ENCODE measurements at regions of chr1 and their contacts with region 1.

Region 1: GRCh38 chr1:160618763-160619274 is 28.0 kb downstream of the SLAMF1 start:
- DNase-seq: no peak
- ATAC-seq: peak; percentile 54
- H3K4me3 ChIP-seq: no peak overlapping the region
- H3K27ac ChIP-seq: no peak overlapping the region; the same call in 1 of the 2 replicates
- H3K4me1 ChIP-seq: peaks cover 28% of the 10 kb centered on the region
- H3K27me3 ChIP-seq: no peaks in the 10 kb centered on the region
- CTCF ChIP-seq: peak; percentile 72 to 88 (median 82)
- EP300 ChIP-seq: no peak
- POLR2A ChIP-seq: no peak
- RAD21 ChIP-seq: peak; percentile 75

Region 2: DNA sequence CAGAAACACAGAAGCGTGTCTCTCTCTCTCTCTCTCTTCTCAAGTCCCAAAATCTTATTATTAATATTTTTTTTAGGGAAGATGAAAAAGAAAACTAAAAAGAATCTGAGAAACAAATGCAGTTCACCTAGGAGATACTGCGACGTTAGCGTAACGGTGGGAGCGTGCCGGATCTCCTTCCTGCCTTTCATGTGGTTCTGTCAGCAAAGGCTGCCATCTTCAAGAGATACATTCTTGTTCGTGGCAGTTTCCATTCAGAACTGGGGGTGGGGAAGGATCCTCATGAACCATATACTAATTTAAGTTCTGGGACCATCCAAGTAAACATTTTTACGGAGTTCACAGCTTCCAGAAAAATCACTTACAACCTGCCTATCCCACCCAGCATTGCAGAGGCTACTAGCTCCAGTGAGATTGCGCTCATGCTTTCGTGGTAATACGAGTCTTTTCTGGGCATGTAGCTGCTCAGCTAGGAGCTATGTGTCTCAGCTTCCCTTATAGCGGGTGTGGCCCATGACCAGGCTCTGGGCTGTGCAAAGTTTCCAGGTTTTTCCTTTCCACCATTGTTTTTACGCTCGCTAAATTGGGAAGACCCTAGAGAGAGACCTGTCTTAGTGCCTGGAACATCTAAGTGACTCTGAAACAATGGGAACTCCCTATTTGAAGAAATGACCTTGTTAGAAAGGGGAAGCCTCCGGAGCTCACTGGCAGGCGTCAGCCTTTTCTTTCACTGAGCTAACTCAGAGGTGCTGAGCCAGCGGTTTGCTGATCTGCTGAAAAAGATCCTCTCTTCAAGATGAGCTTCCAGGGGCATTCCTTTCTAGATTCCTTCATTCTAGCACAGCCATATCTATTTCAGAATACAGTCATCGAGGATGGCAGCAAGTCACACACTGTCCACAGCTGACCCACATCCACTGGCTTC is 10.7 kb after region 1 on chr1:
- CTCF ChIA-PET with region 1: interaction called, 9 read pairs
- POLR2A ChIA-PET with region 1: interaction called, 5 read pairs
- RAD21 ChIA-PET with region 1: interaction called, 12 read pairs
- SMC1A ChIA-PET with region 1: interaction called, 9 read pairs
- in situ Hi-C with region 1: no loop called
- intact Hi-C with region 1: no loop called
- DNase-seq: no peak
- ATAC-seq: no peak
- H3K4me3 ChIP-seq: peak overlapping the region; percentile 3; the same call in 1 of the 2 replicates
- H3K27ac ChIP-seq: peak overlapping the region; percentile 30
- H3K4me1 ChIP-seq: peaks cover 69% of the 10 kb centered on the region
- H3K27me3 ChIP-seq: no peaks in the 10 kb centered on the region
- CTCF ChIP-seq: no peak
- EP300 ChIP-seq: no peak
- POLR2A ChIP-seq: peak; percentile 46
- RAD21 ChIP-seq: no peak

Region 3: DNA sequence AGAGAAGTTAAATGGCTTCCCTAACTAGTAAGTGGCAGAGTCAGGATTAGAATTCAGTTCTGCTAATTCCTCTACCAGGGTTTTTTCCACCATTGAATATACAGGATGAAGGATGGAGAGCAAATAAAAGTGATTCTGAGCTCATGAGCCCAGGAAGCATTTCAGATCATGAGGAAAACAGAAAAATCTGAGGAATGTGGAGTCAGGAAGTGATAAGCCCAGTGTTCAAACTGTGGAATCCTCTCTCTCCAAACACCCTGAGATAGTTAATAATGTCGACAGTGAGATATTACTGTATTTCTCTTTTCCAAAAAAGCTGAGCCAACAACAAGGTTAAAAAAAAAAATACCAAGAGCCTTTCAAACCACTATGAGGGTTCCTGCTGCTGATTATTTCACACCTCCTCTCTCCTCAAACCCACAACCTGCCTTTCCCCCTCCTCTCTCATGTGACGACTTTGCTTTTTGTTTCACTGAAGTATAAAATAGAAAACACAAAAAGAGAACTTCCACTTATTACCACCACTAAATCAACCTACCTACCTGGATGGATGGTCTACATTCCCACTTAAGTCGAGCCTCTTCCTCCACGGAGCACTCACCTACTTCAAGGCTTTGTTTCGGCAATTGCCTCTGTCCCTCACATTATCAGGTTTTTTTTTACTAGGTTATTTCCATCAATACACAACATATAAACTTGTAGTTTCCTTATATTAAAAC is 19.2 kb after region 1 on chr1:
- CTCF ChIA-PET with region 1: interaction called, 9 read pairs
- POLR2A ChIA-PET with region 1: interaction called, 68 read pairs
- RAD21 ChIA-PET with region 1: interaction called, 194 read pairs
- SMC1A ChIA-PET with region 1: interaction called, 259 read pairs
- in situ Hi-C with region 1: no loop called
- intact Hi-C with region 1: no loop called
- DNase-seq: no peak
- ATAC-seq: peak; percentile 29
- H3K4me3 ChIP-seq: peak overlapping the region; percentile 56
- H3K27ac ChIP-seq: peak overlapping the region; percentile 77
- H3K4me1 ChIP-seq: peaks cover 56% of the 10 kb centered on the region
- H3K27me3 ChIP-seq: no peaks in the 10 kb centered on the region
- CTCF ChIP-seq: no peak
- EP300 ChIP-seq: 0 out of 4 replicates have a peak, but pooled peaks have one; percentile 32 to 36
- POLR2A ChIP-seq: no peak
- RAD21 ChIP-seq: no peak

Region 4: GRCh38 chr1:160646711-160647328 is 28.0 kb after region 1 on chr1 and contains the start of gene SLAMF1:
- CTCF ChIA-PET with region 1: interaction called, 10 read pairs
- POLR2A ChIA-PET with region 1: interaction called, 68 read pairs
- RAD21 ChIA-PET with region 1: interaction called, 194 read pairs
- SMC1A ChIA-PET with region 1: interaction called, 259 read pairs
- in situ Hi-C with region 1: no loop called
- intact Hi-C with region 1: no loop called
- DNase-seq: peak; percentile 95
- ATAC-seq: peak; percentile 63
- H3K4me3 ChIP-seq: peak within 1 kb of the TSS; percentile 95
- H3K27ac ChIP-seq: peak within 1 kb of the TSS; percentile 95
- H3K4me1 ChIP-seq: peaks cover 19% of the 10 kb centered on the region
- H3K27me3 ChIP-seq: no peaks in the 10 kb centered on the region
- CTCF ChIP-seq: no peak
- EP300 ChIP-seq: peak; percentile 5 to 19; a peak in 1 of 4 replicates
- POLR2A ChIP-seq: peak; percentile 82
- RAD21 ChIP-seq: no peak
- polyA plus RNA-seq, gene SLAMF1: 128 to 145 TPM

Region 5: DNA sequence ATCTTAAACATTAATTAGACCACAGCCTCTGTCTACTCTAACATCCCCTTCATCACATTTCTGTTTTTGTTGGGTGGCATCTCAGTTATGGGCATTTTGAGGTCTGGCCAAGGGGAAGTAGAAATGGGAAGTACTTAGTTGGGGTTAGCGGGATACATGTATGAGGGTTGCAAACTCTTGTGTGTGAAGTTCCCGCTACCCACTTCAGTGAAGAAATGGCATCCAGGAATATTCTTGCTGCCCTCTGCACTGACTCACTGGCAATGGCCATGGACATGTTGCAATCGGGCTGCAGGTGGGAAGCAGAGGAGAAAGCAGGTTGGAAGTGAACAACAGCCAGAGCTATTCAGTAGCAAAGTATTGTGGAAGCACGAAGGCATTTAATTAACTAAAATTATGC is 85.4 kb after region 1 on chr1:
- CTCF ChIA-PET with region 1: interaction called, 10 read pairs
- POLR2A ChIA-PET with region 1: interaction called, 6 read pairs
- RAD21 ChIA-PET with region 1: no interaction called
- SMC1A ChIA-PET with region 1: no interaction called
- in situ Hi-C with region 1: no loop called
- intact Hi-C with region 1: no loop called
- DNase-seq: no peak
- ATAC-seq: peak; percentile 1; the same call in 1 of the 3 replicates
- H3K4me3 ChIP-seq: peak overlapping the region; percentile 59
- H3K27ac ChIP-seq: peak overlapping the region; percentile 3; the same call in 1 of the 2 replicates
- H3K4me1 ChIP-seq: peaks cover 7% of the 10 kb centered on the region; the same call in 1 of the 2 replicates
- H3K27me3 ChIP-seq: no peaks in the 10 kb centered on the region
- CTCF ChIP-seq: no peak
- EP300 ChIP-seq: no peak
- POLR2A ChIP-seq: no peak
- RAD21 ChIP-seq: no peak

Region 6: DNA sequence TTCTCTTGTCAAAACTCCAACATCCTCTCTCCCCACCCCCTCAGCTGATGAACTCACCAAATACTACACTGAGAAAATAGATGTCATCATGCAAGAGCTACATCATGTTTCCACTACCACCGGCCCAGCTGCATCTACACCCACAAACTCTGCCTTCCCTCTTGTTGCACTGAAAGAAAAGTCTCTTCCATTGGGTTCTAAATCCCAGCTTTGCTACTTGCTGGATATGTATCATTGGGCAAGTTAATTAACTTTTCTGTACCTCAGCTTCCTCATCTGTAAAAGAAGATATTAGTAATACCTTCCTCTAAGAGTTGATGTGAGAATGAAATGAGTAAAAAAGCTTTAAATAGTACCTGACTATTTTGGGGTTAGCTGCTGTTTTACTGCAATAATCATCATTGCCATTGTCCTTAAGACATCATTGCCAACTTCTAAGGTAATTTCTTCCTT is 1296.3 kb after region 1 on chr1:
- CTCF ChIA-PET with region 1: no interaction called
- POLR2A ChIA-PET with region 1: no interaction called
- RAD21 ChIA-PET with region 1: no interaction called
- SMC1A ChIA-PET with region 1: no interaction called
- in situ Hi-C with region 1: no loop called
- intact Hi-C with region 1: no loop called
- DNase-seq: peak; percentile 53
- ATAC-seq: peak; percentile 89
- H3K4me3 ChIP-seq: peak overlapping the region; percentile 21; the same call in 1 of the 2 replicates
- H3K27ac ChIP-seq: peak overlapping the region; percentile 71
- H3K4me1 ChIP-seq: peaks cover 19% of the 10 kb centered on the region
- H3K27me3 ChIP-seq: no peaks in the 10 kb centered on the region
- CTCF ChIP-seq: no peak
- EP300 ChIP-seq: peak in 1 of 2 experiments; percentile 33; a peak in 1 of 4 replicates
- POLR2A ChIP-seq: no peak
- RAD21 ChIP-seq: no peak